Naive thymus-derived CD8-positive, alpha-beta T cell (primary cell): ENCODE measurements at regions of chr16 and their contacts with region 1.

Region 1: GRCh38 chr16:2520092-2520783 is at the start of gene AMDHD2:
- DNase-seq: peak; percentile 82 to 94 (median 90)
- ATAC-seq: peak; percentile 59 to 64
- H3K4me3 Mint-ChIP-seq: peak within 1 kb of the TSS; percentile 84 to 96 (median 90)
- H3K27ac Mint-ChIP-seq: peak within 1 kb of the TSS; percentile 91 to 99 (median 97)
- H3K4me1 Mint-ChIP-seq: peaks cover 34 to 73% (median 67%) of the 10 kb centered on the region in 4 donors
- H3K27me3 Mint-ChIP-seq: peaks cover 0 to 5% (median 0%) of the 10 kb centered on the region in 5 donors
- polyA plus RNA-seq, gene AMDHD2: 15.2 to 17.4 (median 16.4) TPM

Region 2: GRCh38 chr16:2531767-2532493 is 11.7 kb after region 1 on chr16:
- POLR2A ChIA-PET with region 1: interaction called, 146 read pairs
- DNase-seq: peak; percentile 89 to 98 (median 96)
- ATAC-seq: peak; percentile 85 to 89
- H3K4me3 Mint-ChIP-seq: peak overlapping the region; percentile 92 to 100 (median 96)
- H3K27ac Mint-ChIP-seq: peak overlapping the region; percentile 92 to 100 (median 99)
- H3K4me1 Mint-ChIP-seq: peaks cover 9 to 34% (median 23%) of the 10 kb centered on the region in 4 donors
- H3K27me3 Mint-ChIP-seq: peaks cover 0 to 3% (median 0%) of the 10 kb centered on the region in 5 donors

Region 3: DNA sequence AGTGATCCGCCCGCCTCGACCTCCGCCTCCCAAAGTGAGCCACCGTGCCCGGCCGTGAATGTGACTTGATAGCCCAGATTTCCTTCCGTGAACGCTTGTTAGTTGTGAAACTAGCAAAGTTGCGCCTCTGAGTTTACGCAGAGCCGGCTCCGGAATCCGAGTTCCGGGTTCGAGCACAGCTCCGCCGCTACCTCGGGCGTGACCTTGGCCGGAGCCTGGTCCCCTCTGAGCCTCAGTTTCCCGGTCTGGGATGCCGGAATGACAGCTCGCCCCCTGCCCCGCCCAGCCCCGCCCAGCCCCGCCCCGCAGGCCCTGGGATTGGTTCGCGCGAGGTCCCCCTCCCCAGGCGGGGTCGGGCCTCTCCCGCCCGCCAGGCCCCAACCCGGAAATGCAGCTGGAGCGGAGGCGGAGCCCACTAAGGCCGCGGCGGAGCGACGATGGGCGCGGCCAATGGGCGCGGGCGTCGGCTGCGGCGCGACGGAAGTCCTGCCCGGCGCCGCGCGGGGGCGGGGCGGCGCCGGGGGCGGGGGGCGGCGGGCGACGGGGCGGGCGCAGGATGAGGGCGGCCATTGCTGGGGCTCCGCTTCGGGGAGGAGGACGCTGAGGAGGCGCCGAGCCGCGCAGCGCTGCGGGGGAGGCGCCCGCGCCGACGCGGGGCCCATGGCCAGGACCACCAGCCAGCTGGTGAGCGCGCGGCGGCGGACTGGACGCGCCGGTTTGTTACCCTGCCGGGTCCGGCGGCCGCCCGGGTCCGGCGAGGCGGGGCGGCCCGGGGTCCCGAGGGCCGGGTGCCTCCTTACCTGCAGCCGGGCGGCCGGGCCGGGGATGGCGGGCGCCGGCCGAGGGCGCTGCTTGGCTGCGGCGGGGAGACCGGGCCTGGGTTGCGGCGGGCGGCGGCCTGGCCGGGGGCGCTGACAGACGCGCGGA is 17.5 kb after region 1 on chr16 and contains the start of gene PDPK1:
- POLR2A ChIA-PET with region 1: interaction called, 146 read pairs
- DNase-seq: peak; percentile 87 to 96 (median 94)
- ATAC-seq: peak; percentile 85 to 86
- H3K4me3 Mint-ChIP-seq: peak within 1 kb of the TSS; percentile 79 to 92 (median 87)
- H3K27ac Mint-ChIP-seq: peak within 1 kb of the TSS; percentile 70 to 96 (median 91)
- H3K4me1 Mint-ChIP-seq: peaks cover 20 to 68% (median 44%) of the 10 kb centered on the region in 4 donors
- H3K27me3 Mint-ChIP-seq: peaks cover 0 to 3% (median 0%) of the 10 kb centered on the region in 5 donors
- polyA plus RNA-seq, gene PDPK1: 27.1 to 44.7 (median 28.6) TPM